Mammary epithelial cell (primary cell): ENCODE measurements at regions of chr5 and their contacts with region 1.

Region 1: DNA sequence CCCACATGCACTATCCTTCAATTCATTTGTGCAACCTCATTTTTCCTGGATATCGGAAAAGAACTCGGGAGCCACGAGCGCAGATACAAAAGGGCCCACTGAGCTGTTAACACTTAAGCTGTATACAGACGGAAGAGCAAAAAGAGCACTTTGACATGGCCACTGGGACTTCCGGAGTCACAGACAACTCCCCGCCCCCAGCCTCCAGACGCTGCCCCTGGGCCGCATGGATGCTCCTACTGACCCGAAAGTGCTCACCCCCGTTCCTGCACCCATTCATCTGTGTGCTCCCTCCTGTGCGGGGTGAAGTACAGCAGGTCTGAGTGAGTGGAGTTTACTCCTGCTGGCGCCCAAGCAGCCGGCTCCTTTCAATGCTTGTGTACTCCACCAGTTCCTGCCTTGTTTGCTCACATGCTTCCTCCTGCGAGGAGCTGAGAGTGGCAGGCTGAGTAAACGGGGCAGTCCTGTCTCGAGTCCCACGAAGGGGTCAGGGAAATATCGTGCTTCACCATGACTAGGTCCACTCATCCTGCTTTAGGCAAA is 901.0 kb upstream of the CTNND2 start:
- DNase-seq: no peak
- H3K4me3 ChIP-seq: no peak overlapping the region
- H3K27ac ChIP-seq: no peak overlapping the region
- H3K4me1 ChIP-seq: no peaks in the 10 kb centered on the region
- H3K27me3 ChIP-seq: no peaks in the 10 kb centered on the region
- CTCF ChIP-seq: no peak

Region 2: DNA sequence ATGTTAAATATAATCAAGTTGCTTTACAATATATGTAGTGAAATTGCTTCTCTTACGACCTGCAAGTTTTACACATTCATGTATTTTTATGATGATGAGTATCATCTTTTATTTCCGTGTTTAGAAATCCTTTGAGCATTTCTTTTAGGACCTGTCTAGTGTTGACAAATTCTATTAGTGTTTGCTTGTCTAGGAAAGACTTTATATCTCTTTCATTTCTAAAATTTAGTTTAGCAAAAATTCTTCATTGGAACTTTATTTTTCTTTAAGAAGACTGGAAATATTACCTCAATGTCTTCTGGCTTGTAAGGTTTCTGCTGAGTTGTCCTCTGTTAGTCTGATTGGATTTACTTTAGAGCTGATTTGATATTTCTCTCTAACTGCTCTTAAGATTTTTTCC is 19.9 kb after region 1 on chr5:
- CTCF ChIA-PET with region 1: no interaction called
- dilution Hi-C with region 1: no loop called
- in situ Hi-C with region 1: no loop called
- intact Hi-C with region 1: loop called (anchors 1 kb)
- DNase-seq: no peak
- H3K4me3 ChIP-seq: no peak overlapping the region
- H3K27ac ChIP-seq: no peak overlapping the region
- H3K4me1 ChIP-seq: no peaks in the 10 kb centered on the region
- H3K27me3 ChIP-seq: no peaks in the 10 kb centered on the region
- CTCF ChIP-seq: no peak

Region 3: DNA sequence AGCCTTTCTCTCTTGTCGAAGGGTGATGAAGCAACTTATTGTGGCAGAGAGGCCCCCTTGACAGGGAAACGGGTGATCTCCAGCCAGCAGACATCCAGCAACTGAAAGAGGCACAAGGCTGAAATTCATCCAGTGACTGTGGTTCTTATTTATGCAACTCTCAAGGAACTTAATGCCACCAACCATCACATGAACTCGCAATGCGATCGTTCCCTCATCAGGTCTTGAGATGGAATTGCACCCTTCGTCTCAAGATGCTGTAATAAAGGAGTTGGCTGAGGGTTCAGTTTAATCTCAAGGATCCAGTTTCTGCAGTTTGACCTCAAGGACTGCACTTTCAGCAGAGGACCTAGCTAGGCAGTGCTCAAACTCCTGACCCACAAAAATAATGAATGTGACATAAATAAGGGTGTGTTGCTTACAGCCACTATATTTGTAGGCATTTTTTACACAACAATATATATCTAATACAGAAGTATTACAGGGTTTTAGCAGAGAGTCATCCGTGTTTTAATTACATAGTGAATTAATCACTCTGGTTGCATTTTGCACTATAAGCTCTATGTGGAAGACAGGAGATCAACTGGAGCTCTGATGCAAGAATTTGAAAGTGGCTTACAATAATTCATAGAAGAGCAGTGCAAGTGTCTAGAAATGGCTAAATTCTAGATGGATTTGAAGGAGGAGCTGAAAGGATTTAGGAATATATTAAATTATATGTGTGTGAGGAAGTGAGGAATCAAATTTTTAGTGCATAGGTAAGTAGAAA is 56.8 kb after region 1 on chr5:
- CTCF ChIA-PET with region 1: no interaction called
- dilution Hi-C with region 1: no loop called
- in situ Hi-C with region 1: no loop called
- intact Hi-C with region 1: no loop called
- DNase-seq: no peak
- H3K4me3 ChIP-seq: no peak overlapping the region
- H3K27ac ChIP-seq: no peak overlapping the region
- H3K4me1 ChIP-seq: no peaks in the 10 kb centered on the region
- H3K27me3 ChIP-seq: no peaks in the 10 kb centered on the region
- CTCF ChIP-seq: no peak